KBM-7 (cell line): ENCODE measurements at regions of chr1 and their contacts with region 1.

Region 1: GRCh38 chr1:66725885-66726665 is 26.2 kb upstream of the DYNLT5 start:
- DNase-seq: peak; percentile 80

Region 2: GRCh38 chr1:66642992-66643391 is 83.1 kb before region 1 on chr1:
- in situ Hi-C with region 1: no loop called
- DNase-seq: no peak

Region 3: GRCh38 chr1:66663730-66664129 is 62.3 kb before region 1 on chr1:
- in situ Hi-C with region 1: loop called (anchors 10 kb)
- DNase-seq: no peak